Posterior cingulate gyrus (tissue), 11 donors: ENCODE measurements at regions of chr3 and their contacts with region 1.

Region 1: GRCh38 chr3:44529927-44530326 is 25.1 kb upstream of the ZKSCAN7 start:
- DNase-seq: no peak

Region 2: GRCh38 chr3:44136421-44136820 is 393.5 kb before region 1 on chr3:
- intact Hi-C with region 1: no loop called
- DNase-seq: no peak

Region 3: DNA sequence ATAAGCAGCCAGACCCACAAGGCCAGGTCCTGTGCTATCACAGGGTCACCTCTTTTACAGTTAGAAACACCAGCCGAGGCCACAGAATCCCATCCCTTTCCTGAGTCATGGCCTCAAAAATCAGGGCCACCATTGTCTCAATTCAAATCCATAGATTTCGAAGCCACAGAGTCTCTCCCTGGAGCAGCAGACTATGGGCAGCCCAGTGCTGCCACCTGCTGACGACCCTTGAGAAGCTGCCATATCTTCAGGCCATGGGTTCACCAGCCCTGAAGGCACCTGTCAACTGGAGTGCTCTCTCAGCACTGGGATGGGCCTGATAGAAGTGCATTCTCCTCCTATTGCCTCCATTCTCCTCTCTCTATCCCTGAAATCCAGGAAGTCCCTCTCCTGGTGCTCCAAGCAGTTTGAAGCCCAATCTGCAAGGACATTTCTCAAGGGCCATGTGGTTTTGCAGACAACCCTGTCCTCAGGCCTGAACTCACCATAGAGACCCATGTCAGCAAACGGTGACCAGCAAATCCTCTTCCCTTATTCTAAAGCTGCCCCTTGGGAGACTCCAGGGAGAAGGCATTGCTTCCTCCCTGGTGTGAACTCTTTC is 384.0 kb after region 1 on chr3:
- intact Hi-C with region 1: loop called (anchors 1 kb)
- DNase-seq: peak in 6 of 10 donors; percentile 50 to 93 (median 58)